ENCODE measurements at regions of chr17 and their contacts with region 1.

Region 1: DNA sequence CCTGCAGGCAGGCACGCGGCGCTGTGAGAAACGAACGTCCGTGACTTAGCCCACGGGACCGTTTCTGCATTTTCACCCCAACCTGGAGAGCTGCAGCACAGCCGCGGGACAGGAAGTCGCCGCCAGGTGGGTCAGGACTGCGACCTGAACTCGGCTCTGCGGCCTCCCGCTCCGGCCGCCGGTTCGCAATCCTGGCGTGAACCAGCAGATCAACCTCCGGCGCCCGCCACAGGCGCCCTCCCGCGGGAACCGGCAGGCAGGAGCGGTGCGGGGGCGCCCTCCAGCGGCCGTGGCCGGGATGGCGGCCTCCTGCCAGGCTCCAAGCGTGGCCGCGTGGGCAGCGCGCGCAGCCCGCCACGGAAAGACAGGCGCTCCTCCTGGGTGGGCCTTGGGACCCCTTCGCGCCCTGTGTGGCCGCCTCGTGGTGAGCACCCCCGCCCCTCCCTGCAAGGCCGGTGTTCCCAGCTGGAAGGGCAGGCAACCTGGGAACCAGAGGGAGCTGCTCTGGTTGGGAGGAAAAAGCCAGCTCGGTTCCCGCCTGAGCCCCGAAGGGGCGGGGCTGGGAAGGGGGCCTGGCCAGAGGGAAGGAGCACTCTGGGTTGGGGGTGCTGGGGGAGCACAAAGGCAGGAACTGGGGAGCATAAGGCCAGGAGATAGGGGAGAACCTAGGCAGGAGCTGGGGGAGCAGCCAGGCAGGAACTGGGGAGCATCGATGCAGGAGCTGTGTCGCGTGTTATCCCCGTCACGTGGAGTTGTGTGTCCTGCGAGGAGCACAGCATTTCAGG is 28.2 kb downstream of the ACTG1 start:
- DNase-seq: peak; percentile 64 to 93
- H3K4me3 ChIP-seq: peak overlapping the region; percentile 27 to 66 (median 46)
- H3K27ac ChIP-seq: no peak overlapping the region
- H3K4me1 ChIP-seq: peaks cover 0 to 29% (median 16%) of the 10 kb centered on the region in 4 experiments; a peak in 6 of 7 replicates
- H3K27me3 ChIP-seq: peaks cover 18 to 49% (median 47%) of the 10 kb centered on the region in 4 experiments
- CTCF ChIP-seq: peak; percentile 85 to 97 (median 85)
- EP300 ChIP-seq: no peak
- POLR2A ChIP-seq: no peak
- RAD21 ChIP-seq: peak; percentile 85 to 92

Region 2: GRCh38 chr17:80991645-80992076 is 492.7 kb before region 1 on chr17 and contains the start of gene CHMP6:
- CTCF ChIA-PET with region 1: no interaction called
- POLR2A ChIA-PET with region 1: no interaction called
- DNase-seq: peak in 1 of 2 experiments; percentile 85
- H3K4me3 ChIP-seq: peak within 1 kb of the TSS; percentile 49 to 93 (median 70)
- H3K27ac ChIP-seq: no peak within 1 kb of the TSS
- H3K4me1 ChIP-seq: peaks cover 0 to 5% (median 3%) of the 10 kb centered on the region in 4 experiments; a peak in 5 of 7 replicates
- H3K27me3 ChIP-seq: peaks cover 0 to 7% (median 3%) of the 10 kb centered on the region in 4 experiments; a peak in 5 of 7 replicates
- CTCF ChIP-seq: peak; percentile 6 to 44 (median 14); a peak in 3 of 4 replicates
- EP300 ChIP-seq: no peak
- POLR2A ChIP-seq: no peak
- RAD21 ChIP-seq: no peak; a peak in 1 of 4 replicates
- total RNA-seq, gene CHMP6: 15.7 and 16.0 TPM in 2 replicates

Region 3: DNA sequence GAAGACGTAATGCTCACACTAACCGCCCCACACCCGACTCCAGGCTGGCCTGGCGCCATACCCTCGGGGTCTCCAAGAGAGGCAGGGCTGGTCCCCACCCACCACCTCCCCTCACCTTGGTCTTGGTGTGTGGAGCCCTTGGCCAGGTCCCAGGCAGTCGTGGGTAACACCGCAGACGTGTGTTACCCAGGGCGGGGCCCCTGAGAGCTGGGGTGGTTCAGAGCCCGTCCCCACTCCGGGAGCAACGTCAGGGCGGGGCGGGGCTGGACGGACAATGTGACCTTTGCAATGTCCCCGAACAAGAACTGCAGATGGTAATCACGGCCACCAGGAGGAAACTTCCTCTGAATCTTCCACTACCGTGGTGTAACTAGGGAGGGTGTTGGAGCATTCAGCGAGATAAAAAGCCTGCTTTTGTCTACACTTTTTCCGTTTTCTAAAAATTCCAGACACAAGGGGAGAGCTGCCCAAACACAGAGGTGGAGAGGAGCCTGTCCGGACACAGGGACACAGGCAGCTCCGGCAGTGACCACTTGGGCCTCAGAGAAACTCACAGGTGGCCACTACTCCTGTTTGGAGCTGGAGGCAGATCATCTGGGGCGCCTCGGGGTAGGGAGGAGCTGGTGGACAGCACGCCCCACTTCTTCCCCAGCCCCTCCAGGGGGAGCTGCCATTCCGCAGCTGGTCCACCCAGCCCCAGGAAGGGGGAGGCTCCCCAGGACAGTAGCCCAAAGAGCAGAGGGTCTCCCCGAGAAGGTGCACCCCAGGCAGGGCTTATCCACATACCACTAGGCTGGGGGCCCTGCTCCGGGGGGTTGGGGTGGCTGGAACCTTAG is 175.1 kb before region 1 on chr17:
- CTCF ChIA-PET with region 1: interaction called, 23 read pairs
- POLR2A ChIA-PET with region 1: interaction called, 3 read pairs
- DNase-seq: peak in 1 of 2 experiments; percentile 78
- H3K4me3 ChIP-seq: peak overlapping the region in 1 of 4 experiments; percentile 22; a peak in 2 of 8 replicates
- H3K27ac ChIP-seq: no peak overlapping the region
- H3K4me1 ChIP-seq: peaks cover 5 to 18% (median 17%) of the 10 kb centered on the region in 4 experiments
- H3K27me3 ChIP-seq: no peaks in the 10 kb centered on the region
- CTCF ChIP-seq: peak; percentile 24 to 60 (median 47)
- EP300 ChIP-seq: no peak
- POLR2A ChIP-seq: no peak
- RAD21 ChIP-seq: peak; percentile 61 to 73

Region 4: DNA sequence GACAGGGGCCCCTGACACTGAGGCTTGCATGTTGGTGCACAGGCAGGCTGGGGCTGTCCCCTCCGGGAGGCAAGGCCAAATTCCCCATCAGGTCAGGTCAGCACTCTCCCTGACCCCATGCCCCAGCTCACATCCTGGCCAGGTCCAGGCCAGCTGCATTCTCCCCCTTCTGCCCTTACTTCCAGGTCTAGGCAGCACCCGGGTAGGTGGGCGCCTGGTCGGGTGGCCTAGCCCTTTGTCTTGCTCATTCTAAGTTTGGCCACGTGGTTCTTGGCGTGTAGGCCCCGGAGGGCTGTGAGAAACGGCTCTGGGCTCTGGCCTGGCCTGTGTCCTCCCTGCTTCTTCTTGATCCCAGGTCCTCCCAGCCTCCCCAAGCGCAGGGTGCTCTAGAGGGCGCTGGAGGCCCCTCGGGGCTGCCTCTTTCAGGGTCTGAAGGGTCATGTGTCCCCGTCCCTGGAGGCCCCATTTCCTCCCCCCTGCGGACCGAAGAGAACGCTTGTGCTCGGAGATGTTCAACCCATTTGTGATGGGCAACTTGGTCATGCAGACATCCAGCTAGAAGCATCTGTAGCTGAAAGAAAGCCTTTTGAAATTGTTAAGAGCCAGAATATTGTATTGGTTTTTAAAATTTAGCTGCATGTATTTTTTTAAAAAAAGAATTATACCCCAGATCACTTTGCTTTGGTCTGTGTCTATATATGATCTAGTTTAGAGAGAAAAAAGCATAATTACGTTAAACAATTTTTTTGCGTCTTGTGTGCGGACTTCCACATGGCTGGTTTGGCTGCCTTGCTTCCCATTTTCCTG is 82.5 kb before region 1 on chr17:
- CTCF ChIA-PET with region 1: interaction called, 13 read pairs
- POLR2A ChIA-PET with region 1: interaction called, 9 read pairs
- DNase-seq: no peak
- H3K4me3 ChIP-seq: peak overlapping the region in 1 of 4 experiments; percentile 56; a peak in 2 of 8 replicates
- H3K27ac ChIP-seq: no peak overlapping the region
- H3K4me1 ChIP-seq: peaks cover 8 to 41% (median 25%) of the 10 kb centered on the region in 4 experiments
- H3K27me3 ChIP-seq: peaks cover 32 to 59% (median 49%) of the 10 kb centered on the region in 4 experiments
- CTCF ChIP-seq: peak; percentile 37 to 58 (median 46)
- EP300 ChIP-seq: no peak
- POLR2A ChIP-seq: no peak
- RAD21 ChIP-seq: peak in 1 of 2 experiments; percentile 22; a peak in 2 of 4 replicates

Region 5: GRCh38 chr17:81428948-81429774 is 55.2 kb before region 1 on chr17:
- CTCF ChIA-PET with region 1: interaction called, 14 read pairs
- POLR2A ChIA-PET with region 1: no interaction called
- DNase-seq: no peak
- H3K4me3 ChIP-seq: no peak overlapping the region
- H3K27ac ChIP-seq: no peak overlapping the region
- H3K4me1 ChIP-seq: peaks cover 0 to 3% (median 0%) of the 10 kb centered on the region in 4 experiments; a peak in 3 of 7 replicates
- H3K27me3 ChIP-seq: no peaks in the 10 kb centered on the region
- CTCF ChIP-seq: no peak
- EP300 ChIP-seq: no peak
- POLR2A ChIP-seq: no peak
- RAD21 ChIP-seq: no peak

Region 6: GRCh38 chr17:81445642-81446503 is 38.5 kb before region 1 on chr17:
- CTCF ChIA-PET with region 1: interaction called, 41 read pairs
- POLR2A ChIA-PET with region 1: no interaction called
- DNase-seq: no peak
- H3K4me3 ChIP-seq: no peak overlapping the region
- H3K27ac ChIP-seq: no peak overlapping the region
- H3K4me1 ChIP-seq: no peaks in the 10 kb centered on the region; a peak in 2 of 7 replicates
- H3K27me3 ChIP-seq: no peaks in the 10 kb centered on the region
- CTCF ChIP-seq: peak; percentile 45 to 57 (median 51)
- EP300 ChIP-seq: no peak
- POLR2A ChIP-seq: no peak
- RAD21 ChIP-seq: peak in 1 of 2 experiments; percentile 17; a peak in 1 of 4 replicates

Region 7: GRCh38 chr17:81500047-81500446 is 15.7 kb after region 1 on chr17:
- CTCF ChIA-PET with region 1: interaction called, 18 read pairs
- POLR2A ChIA-PET with region 1: interaction called, 1,004 read pairs
- DNase-seq: no peak
- H3K4me3 ChIP-seq: no peak overlapping the region
- H3K27ac ChIP-seq: no peak overlapping the region
- H3K4me1 ChIP-seq: peaks cover 0 to 3% (median 2%) of the 10 kb centered on the region in 4 experiments; a peak in 3 of 7 replicates
- H3K27me3 ChIP-seq: no peaks in the 10 kb centered on the region
- CTCF ChIP-seq: no peak
- EP300 ChIP-seq: no peak
- POLR2A ChIP-seq: no peak
- RAD21 ChIP-seq: no peak

Region 8: GRCh38 chr17:81519284-81519955 is 35.0 kb after region 1 on chr17:
- CTCF ChIA-PET with region 1: interaction called, 13 read pairs
- POLR2A ChIA-PET with region 1: interaction called, 1,004 read pairs
- DNase-seq: peak in 1 of 2 experiments; percentile 69
- H3K4me3 ChIP-seq: peak overlapping the region; percentile 43 to 73 (median 46)
- H3K27ac ChIP-seq: no peak overlapping the region
- H3K4me1 ChIP-seq: peaks cover 0 to 54% (median 30%) of the 10 kb centered on the region in 4 experiments; a peak in 6 of 7 replicates
- H3K27me3 ChIP-seq: peaks cover 0 to 43% (median 27%) of the 10 kb centered on the region in 4 experiments; a peak in 5 of 7 replicates
- CTCF ChIP-seq: peak; percentile 30 to 60 (median 51)
- EP300 ChIP-seq: no peak
- POLR2A ChIP-seq: no peak
- RAD21 ChIP-seq: peak in 1 of 2 experiments; percentile 35; a peak in 3 of 4 replicates

Region 9: GRCh38 chr17:81586096-81586495 is 101.7 kb after region 1 on chr17:
- CTCF ChIA-PET with region 1: no interaction called
- POLR2A ChIA-PET with region 1: no interaction called
- DNase-seq: no peak
- H3K4me3 ChIP-seq: no peak overlapping the region
- H3K27ac ChIP-seq: no peak overlapping the region
- H3K4me1 ChIP-seq: no peaks in the 10 kb centered on the region
- H3K27me3 ChIP-seq: no peaks in the 10 kb centered on the region
- CTCF ChIP-seq: no peak
- EP300 ChIP-seq: no peak
- POLR2A ChIP-seq: no peak
- RAD21 ChIP-seq: no peak